Dendritic cell treated with granulocyte-macrophage colony-stimulating factor and Interleukin-4, amounts not matched to agents 40 ng/mL and 50 ng/mL, for 4 days (primary cell): ENCODE measurements at regions of chr12 and their contacts with region 1.

Region 1: GRCh38 chr12:38138225-38139221 is 178.1 kb upstream of the ALG10B start:
- H3K4me3 Mint-ChIP-seq: peak overlapping the region; percentile 81
- H3K27ac Mint-ChIP-seq: peak overlapping the region; percentile 1
- H3K4me1 Mint-ChIP-seq: peaks cover 11% of the 10 kb centered on the region
- H3K27me3 Mint-ChIP-seq: peaks cover 12% of the 10 kb centered on the region

Region 2: GRCh38 chr12:38316391-38317129 is 178.0 kb after region 1 on chr12 and contains the start of gene ALG10B:
- intact Hi-C with region 1: loop called (anchors 1 kb)
- H3K4me3 Mint-ChIP-seq: peak within 1 kb of the TSS; percentile 87
- H3K27ac Mint-ChIP-seq: peak within 1 kb of the TSS; percentile 90
- H3K4me1 Mint-ChIP-seq: peaks cover 7% of the 10 kb centered on the region
- H3K27me3 Mint-ChIP-seq: peaks cover 2% of the 10 kb centered on the region

Region 3: DNA sequence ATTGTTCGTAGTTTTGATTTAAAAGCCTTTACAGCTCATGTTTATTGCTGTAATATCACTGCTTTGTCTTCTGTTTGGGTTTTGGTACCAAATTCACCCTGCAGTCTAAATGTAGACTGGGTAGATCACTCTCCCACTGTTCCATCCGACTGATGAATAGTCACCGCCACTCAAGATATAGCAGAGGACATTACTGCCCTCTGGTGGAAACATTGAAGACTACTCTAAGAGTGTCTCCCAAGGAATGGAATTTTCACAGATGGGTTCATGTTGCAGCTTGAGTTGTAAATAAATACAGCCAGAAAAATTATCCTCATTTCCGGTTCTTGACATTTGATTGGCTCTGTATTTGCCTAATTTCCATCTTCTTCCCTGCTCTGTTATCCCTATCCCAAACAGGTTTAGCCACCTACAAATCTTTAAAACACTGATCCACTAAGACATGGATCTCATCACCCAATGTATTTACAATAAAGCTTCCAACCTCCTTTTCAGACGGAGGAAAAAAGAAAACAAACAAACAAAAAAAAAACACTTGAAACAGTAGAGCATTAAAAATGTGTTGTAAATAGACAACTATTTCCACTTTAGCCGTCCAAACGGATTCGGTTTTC is 965.1 kb after region 1 on chr12:
- intact Hi-C with region 1: loop called (anchors 10 kb)
- H3K4me3 Mint-ChIP-seq: no peak overlapping the region
- H3K27ac Mint-ChIP-seq: no peak overlapping the region
- H3K4me1 Mint-ChIP-seq: peaks cover 5% of the 10 kb centered on the region
- H3K27me3 Mint-ChIP-seq: no peaks in the 10 kb centered on the region

Region 4: GRCh38 chr12:39272871-39273770 is 1134.6 kb after region 1 on chr12:
- intact Hi-C with region 1: loop called (anchors 5 kb)
- H3K4me3 Mint-ChIP-seq: no peak overlapping the region
- H3K27ac Mint-ChIP-seq: no peak overlapping the region
- H3K4me1 Mint-ChIP-seq: no peaks in the 10 kb centered on the region
- H3K27me3 Mint-ChIP-seq: no peaks in the 10 kb centered on the region